ENCODE measurements at regions of chr18 and their contacts with region 1.

Region 1: GRCh38 chr18:55289775-55290174 is 298.2 kb downstream of the TCF4 start:
- DNase-seq: no peak
- ATAC-seq: peak; percentile 31
- H3K4me3 ChIP-seq: no peak overlapping the region
- H3K4me3 Mint-ChIP-seq: peak overlapping the region; percentile 46
- H3K27ac ChIP-seq: peak overlapping the region in 1 of 2 donors; percentile 17
- H3K27ac Mint-ChIP-seq: peak overlapping the region; percentile 59
- H3K4me1 ChIP-seq: peaks cover 14 to 35% of the 10 kb centered on the region in 2 donors
- H3K4me1 Mint-ChIP-seq: peaks cover 81% of the 10 kb centered on the region
- H3K27me3 ChIP-seq: no peaks in the 10 kb centered on the region
- H3K27me3 Mint-ChIP-seq: no peaks in the 10 kb centered on the region
- CTCF ChIP-seq: no peak

Region 2: GRCh38 chr18:55251254-55251971 is 38.4 kb before region 1 on chr18:
- CTCF ChIA-PET with region 1: no interaction called
- POLR2A ChIA-PET with region 1: no interaction called
- intact Hi-C with region 1: no loop called
- DNase-seq: no peak
- ATAC-seq: no peak
- H3K4me3 ChIP-seq: no peak overlapping the region
- H3K4me3 Mint-ChIP-seq: peak overlapping the region; percentile 52
- H3K27ac ChIP-seq: peak overlapping the region in 1 of 2 donors; percentile 31
- H3K27ac Mint-ChIP-seq: peak overlapping the region; percentile 59
- H3K4me1 ChIP-seq: peaks cover 45 to 52% of the 10 kb centered on the region in 2 donors
- H3K4me1 Mint-ChIP-seq: peaks cover 63% of the 10 kb centered on the region
- H3K27me3 ChIP-seq: no peaks in the 10 kb centered on the region
- H3K27me3 Mint-ChIP-seq: no peaks in the 10 kb centered on the region
- CTCF ChIP-seq: no peak

Region 3: GRCh38 chr18:55275039-55275901 is 14.5 kb before region 1 on chr18:
- CTCF ChIA-PET with region 1: interaction called, 3 read pairs
- POLR2A ChIA-PET with region 1: interaction called, 4 read pairs
- intact Hi-C with region 1: loop called (anchors 2 kb)
- DNase-seq: peak; percentile 52
- ATAC-seq: peak; percentile 53
- H3K4me3 ChIP-seq: no peak overlapping the region
- H3K4me3 Mint-ChIP-seq: no peak overlapping the region
- H3K27ac ChIP-seq: peak overlapping the region in 1 of 2 donors; percentile 70
- H3K27ac Mint-ChIP-seq: peak overlapping the region; percentile 56
- H3K4me1 ChIP-seq: peaks cover 0 to 11% of the 10 kb centered on the region in 2 donors
- H3K4me1 Mint-ChIP-seq: peaks cover 45% of the 10 kb centered on the region
- H3K27me3 ChIP-seq: no peaks in the 10 kb centered on the region
- H3K27me3 Mint-ChIP-seq: no peaks in the 10 kb centered on the region
- CTCF ChIP-seq: peak; percentile 63

Region 4: GRCh38 chr18:55805666-55806065 is 515.9 kb after region 1 on chr18:
- CTCF ChIA-PET with region 1: no interaction called
- POLR2A ChIA-PET with region 1: no interaction called
- intact Hi-C with region 1: no loop called
- DNase-seq: no peak
- ATAC-seq: no peak
- H3K4me3 ChIP-seq: no peak overlapping the region
- H3K4me3 Mint-ChIP-seq: no peak overlapping the region
- H3K27ac ChIP-seq: no peak overlapping the region
- H3K27ac Mint-ChIP-seq: no peak overlapping the region
- H3K4me1 ChIP-seq: no peaks in the 10 kb centered on the region
- H3K4me1 Mint-ChIP-seq: no peaks in the 10 kb centered on the region
- H3K27me3 ChIP-seq: no peaks in the 10 kb centered on the region
- H3K27me3 Mint-ChIP-seq: no peaks in the 10 kb centered on the region
- CTCF ChIP-seq: no peak